Testis (tissue), 5 donors: ENCODE measurements at regions of chr3 and their contacts with region 1.

Region 1: GRCh38 chr3:132641837-132642538 is 17.6 kb downstream of the ACAD11 start:
- DNase-seq: no peak
- H3K4me3 ChIP-seq: no peak overlapping the region
- H3K27ac ChIP-seq: no peak overlapping the region
- H3K4me1 ChIP-seq: no peaks in the 10 kb centered on the region
- H3K27me3 ChIP-seq: no peaks in the 10 kb centered on the region
- CTCF ChIP-seq: peak; percentile 50 to 83 (median 65)
- POLR2A ChIP-seq: no peak

Region 2: DNA sequence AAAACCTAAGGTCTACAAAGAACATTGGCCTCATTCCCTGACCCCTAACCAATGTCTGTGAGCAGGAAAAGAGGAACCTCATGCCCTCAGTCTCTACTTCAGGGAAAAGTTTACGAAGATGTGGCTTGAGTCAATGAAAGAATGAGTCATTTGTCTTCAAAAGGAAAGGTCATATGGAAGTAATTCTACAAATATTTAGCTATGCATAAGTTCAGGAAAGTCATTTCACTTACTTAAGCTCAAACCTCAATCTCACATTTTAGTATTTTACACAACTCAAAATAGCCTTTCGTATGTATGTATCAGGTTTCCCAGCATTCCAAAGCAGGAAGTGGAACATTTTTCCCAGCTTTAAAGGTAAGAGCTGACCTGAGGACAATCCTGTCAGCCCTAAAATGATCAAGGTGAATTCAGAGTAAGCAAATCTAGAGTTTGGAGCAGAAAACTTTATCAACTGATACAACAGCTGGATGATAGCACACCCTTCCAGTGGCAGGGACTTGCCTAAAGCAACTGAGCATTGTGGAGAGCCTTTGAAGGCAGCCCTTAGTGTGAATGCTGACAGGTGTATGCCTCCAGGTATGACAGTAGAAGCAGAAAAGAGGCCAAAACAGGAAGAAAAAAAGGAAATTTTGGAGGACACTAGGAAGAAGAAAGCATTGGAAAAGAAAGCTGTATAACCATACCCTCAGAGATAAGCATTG is 98.8 kb before region 1 on chr3:
- intact Hi-C with region 1: loop called (anchors 5 kb)
- DNase-seq: no peak
- H3K4me3 ChIP-seq: no peak overlapping the region
- H3K27ac ChIP-seq: no peak overlapping the region
- H3K4me1 ChIP-seq: no peaks in the 10 kb centered on the region
- H3K27me3 ChIP-seq: no peaks in the 10 kb centered on the region
- CTCF ChIP-seq: no peak
- POLR2A ChIP-seq: no peak

Region 3: DNA sequence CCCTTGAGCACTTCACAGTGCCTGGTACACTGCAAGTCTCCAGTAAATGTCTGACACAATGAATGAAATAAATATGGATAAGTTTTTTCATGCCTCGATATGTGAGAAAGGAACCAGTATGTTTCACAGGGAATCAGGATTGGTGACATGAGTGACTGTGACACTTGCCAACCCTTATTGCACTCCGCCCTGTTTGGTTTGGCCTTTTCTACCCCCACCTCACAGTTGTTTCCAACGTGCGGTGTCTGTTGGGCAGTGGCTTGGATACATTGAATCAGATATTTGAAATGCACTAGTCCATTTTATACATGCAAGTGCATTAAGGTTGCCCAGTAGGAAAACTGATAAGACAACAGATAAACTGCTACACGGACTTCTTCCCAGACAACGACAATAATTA is 78.2 kb after region 1 on chr3:
- intact Hi-C with region 1: no loop called
- DNase-seq: no peak
- H3K4me3 ChIP-seq: peak overlapping the region in 1 of 2 donors; percentile 80
- H3K27ac ChIP-seq: no peak overlapping the region
- H3K4me1 ChIP-seq: peaks cover 14% of the 10 kb centered on the region
- H3K27me3 ChIP-seq: no peaks in the 10 kb centered on the region
- CTCF ChIP-seq: no peak
- POLR2A ChIP-seq: no peak